ENCODE measurements at regions of chr3 and their contacts with region 1.

Region 1: DNA sequence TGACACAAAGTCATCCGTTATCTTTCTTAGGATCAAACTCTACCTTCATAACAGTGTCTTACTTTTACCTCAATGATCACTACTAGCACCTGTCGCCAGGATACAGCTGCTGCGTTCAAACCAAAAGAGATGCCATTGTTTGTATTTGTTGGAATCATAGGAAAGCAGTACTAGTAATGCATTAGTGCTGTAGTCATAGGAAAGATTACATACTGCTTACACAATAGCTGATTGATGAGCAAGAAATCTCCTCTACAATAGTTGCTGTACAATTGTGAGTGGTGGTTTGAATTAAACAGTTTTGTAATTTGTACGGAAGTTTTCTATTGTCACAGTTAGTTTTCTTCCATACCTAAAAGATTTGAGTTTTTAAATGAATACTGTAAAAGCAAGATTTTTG is 21.4 kb downstream of the ACAP2 start:
- DNase-seq: no peak
- ATAC-seq: no peak
- H3K4me3 ChIP-seq: no peak overlapping the region
- H3K4me3 Mint-ChIP-seq: no peak overlapping the region
- H3K27ac ChIP-seq: no peak overlapping the region
- H3K27ac Mint-ChIP-seq: peak overlapping the region; percentile 22
- H3K4me1 ChIP-seq: peaks cover 19% of the 10 kb centered on the region
- H3K4me1 Mint-ChIP-seq: peaks cover 68% of the 10 kb centered on the region
- H3K27me3 ChIP-seq: no peaks in the 10 kb centered on the region
- H3K27me3 Mint-ChIP-seq: no peaks in the 10 kb centered on the region
- CTCF ChIP-seq: no peak

Region 2: GRCh38 chr3:195385526-195385925 is 35.9 kb before region 1 on chr3:
- CTCF ChIA-PET with region 1: no interaction called
- POLR2A ChIA-PET with region 1: no interaction called
- intact Hi-C with region 1: loop called in 1 of 2 experiments (anchors 2 kb)
- DNase-seq: no peak
- ATAC-seq: no peak
- H3K4me3 ChIP-seq: no peak overlapping the region
- H3K4me3 Mint-ChIP-seq: no peak overlapping the region
- H3K27ac ChIP-seq: no peak overlapping the region
- H3K27ac Mint-ChIP-seq: peak overlapping the region; percentile 13
- H3K4me1 ChIP-seq: no peaks in the 10 kb centered on the region
- H3K4me1 Mint-ChIP-seq: peaks cover 51% of the 10 kb centered on the region
- H3K27me3 ChIP-seq: no peaks in the 10 kb centered on the region
- H3K27me3 Mint-ChIP-seq: no peaks in the 10 kb centered on the region
- CTCF ChIP-seq: no peak